ENCODE measurements at regions of chr11 and their contacts with region 1.

Region 1: DNA sequence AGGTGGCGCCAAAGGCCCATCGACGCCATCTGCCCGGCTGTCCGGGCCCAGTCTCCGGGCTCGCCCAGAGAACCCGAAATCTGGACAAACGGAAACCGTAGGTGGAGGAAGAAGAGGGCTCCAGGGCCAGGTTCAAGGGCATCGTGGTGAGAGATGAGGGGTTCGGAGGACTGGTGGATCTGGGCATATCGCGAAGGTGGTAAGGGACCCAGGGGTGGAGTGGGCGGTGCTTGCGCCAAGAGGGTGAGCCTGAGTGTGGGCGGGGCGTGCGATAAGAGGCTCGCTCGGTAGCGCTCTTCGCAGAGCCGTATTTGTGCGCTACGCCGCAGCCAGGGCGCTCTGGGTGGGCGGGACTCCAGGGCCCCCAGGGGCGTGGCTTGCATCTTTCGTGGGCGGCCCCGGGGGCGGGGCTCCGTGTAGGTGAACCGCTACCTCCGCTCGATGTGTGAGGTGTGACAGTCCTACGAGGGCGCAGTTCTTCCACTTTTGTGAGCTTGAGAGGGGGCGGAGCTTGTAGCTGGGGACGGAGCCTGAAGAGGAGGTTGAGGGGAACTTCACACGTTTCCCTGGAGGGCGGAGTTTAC is 4.8 kb downstream of the CD248 start:
- DNase-seq: peak; percentile 88 to 89
- H3K4me3 ChIP-seq: peak overlapping the region; percentile 66
- H3K27ac ChIP-seq: peak overlapping the region; percentile 45; the same call in 1 of the 2 replicates
- H3K4me1 ChIP-seq: peaks cover 6% of the 10 kb centered on the region
- H3K27me3 ChIP-seq: peaks cover 18% of the 10 kb centered on the region
- CTCF ChIP-seq: peak; percentile 95

Region 2: DNA sequence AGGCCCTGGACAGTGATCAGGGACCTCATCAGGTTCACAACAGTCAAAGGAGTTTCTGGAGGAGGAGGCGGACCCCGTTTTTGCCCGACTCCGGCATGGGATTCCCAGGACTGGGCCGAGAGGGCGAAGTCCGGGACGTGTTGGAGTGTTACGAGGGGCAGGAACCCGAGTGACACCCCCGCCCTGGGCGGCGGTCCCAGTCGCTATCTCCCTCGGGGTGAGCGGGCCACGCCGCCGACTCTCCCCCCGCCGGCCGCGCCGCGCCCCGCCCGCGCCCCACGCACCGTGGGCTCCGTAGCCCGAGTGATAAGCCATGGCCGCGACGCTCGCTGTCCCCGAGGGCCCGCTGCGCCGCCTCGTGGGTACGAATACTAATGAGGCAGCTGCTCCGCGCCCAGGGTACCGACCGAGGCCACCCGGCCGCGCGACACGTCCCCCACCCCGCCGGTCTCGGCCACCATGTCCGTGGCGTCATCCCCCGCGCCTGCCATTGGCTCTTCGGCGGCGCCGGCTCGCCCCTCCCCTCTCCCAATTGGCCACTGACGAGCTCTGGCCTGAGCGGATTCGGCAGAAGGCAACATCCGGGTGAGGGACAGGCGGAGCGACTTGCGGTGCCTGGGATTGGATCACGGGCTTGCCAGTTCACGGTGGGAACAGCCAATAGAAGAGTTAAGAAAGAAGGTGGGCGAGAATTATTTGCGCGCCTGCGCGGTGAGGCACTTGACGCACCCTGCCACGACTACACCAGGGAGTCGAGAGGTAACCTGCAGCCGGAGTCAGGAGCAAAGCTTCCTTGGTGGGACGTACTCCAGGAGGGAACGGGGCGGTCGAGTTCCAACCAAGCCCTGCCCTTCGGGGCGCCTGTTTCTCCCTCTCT is 23.1 kb before region 1 on chr11 and contains the start of gene YIF1A:
- CTCF ChIA-PET with region 1: interaction called, 13 read pairs
- POLR2A ChIA-PET with region 1: interaction called, 8 read pairs
- intact Hi-C with region 1: no loop called
- DNase-seq: peak; percentile 99 to 100
- H3K4me3 ChIP-seq: peak within 1 kb of the TSS; percentile 96
- H3K27ac ChIP-seq: peak within 1 kb of the TSS; percentile 71
- H3K4me1 ChIP-seq: peaks cover 19% of the 10 kb centered on the region
- H3K27me3 ChIP-seq: no peaks in the 10 kb centered on the region
- CTCF ChIP-seq: no peak
- total RNA-seq, gene YIF1A: 81.8 and 84.8 TPM in 2 replicates

Region 3: GRCh38 chr11:66328307-66329144 is 16.5 kb after region 1 on chr11:
- CTCF ChIA-PET with region 1: interaction called, 5 read pairs
- POLR2A ChIA-PET with region 1: interaction called, 4 read pairs
- intact Hi-C with region 1: loop called (anchors 1 kb)
- DNase-seq: peak; percentile 67 to 80
- H3K4me3 ChIP-seq: no peak overlapping the region
- H3K27ac ChIP-seq: no peak overlapping the region
- H3K4me1 ChIP-seq: peaks cover 34% of the 10 kb centered on the region
- H3K27me3 ChIP-seq: no peaks in the 10 kb centered on the region
- CTCF ChIP-seq: peak; percentile 99

Region 4: GRCh38 chr11:66371627-66372415 is 59.8 kb after region 1 on chr11 and contains the start of gene SLC29A2:
- CTCF ChIA-PET with region 1: interaction called, 4 read pairs
- POLR2A ChIA-PET with region 1: interaction called, 7 read pairs
- intact Hi-C with region 1: loop called (anchors 5 kb)
- DNase-seq: peak; percentile 93 to 100
- H3K4me3 ChIP-seq: peak within 1 kb of the TSS; percentile 95
- H3K27ac ChIP-seq: peak within 1 kb of the TSS; percentile 80
- H3K4me1 ChIP-seq: peaks cover 24% of the 10 kb centered on the region
- H3K27me3 ChIP-seq: no peaks in the 10 kb centered on the region
- CTCF ChIP-seq: no peak
- total RNA-seq, gene SLC29A2: 28.9 and 36.1 TPM in 2 replicates

Region 5: GRCh38 chr11:66429983-66430602 is 118.0 kb after region 1 on chr11:
- CTCF ChIA-PET with region 1: interaction called, 3 read pairs
- POLR2A ChIA-PET with region 1: no interaction called
- intact Hi-C with region 1: loop called (anchors 2 kb)
- DNase-seq: peak in 1 of 2 experiments; percentile 53
- H3K4me3 ChIP-seq: no peak overlapping the region
- H3K27ac ChIP-seq: no peak overlapping the region
- H3K4me1 ChIP-seq: no peaks in the 10 kb centered on the region
- H3K27me3 ChIP-seq: peaks cover 3% of the 10 kb centered on the region; the same call in 1 of the 2 replicates
- CTCF ChIP-seq: peak; percentile 95

Measured in PC-9 (cell line).